Mammary epithelial cell (primary cell): ENCODE measurements at regions of chr14 and their contacts with region 1.

Region 1: GRCh38 chr14:85528080-85528896 is 1.7 kb upstream of the FLRT2 start:
- DNase-seq: peak; percentile 77
- H3K4me3 ChIP-seq: peak overlapping the region; percentile 89 to 90 (median 89)
- H3K27ac ChIP-seq: peak overlapping the region; percentile 67
- H3K4me1 ChIP-seq: peaks cover 35% of the 10 kb centered on the region
- H3K27me3 ChIP-seq: no peaks in the 10 kb centered on the region
- CTCF ChIP-seq: peak; percentile 62 to 79

Region 2: GRCh38 chr14:84250893-84251292 is 1277.4 kb before region 1 on chr14:
- CTCF ChIA-PET with region 1: no interaction called
- dilution Hi-C with region 1: no loop called
- in situ Hi-C with region 1: no loop called
- intact Hi-C with region 1: no loop called
- DNase-seq: no peak
- H3K4me3 ChIP-seq: no peak overlapping the region
- H3K27ac ChIP-seq: no peak overlapping the region
- H3K4me1 ChIP-seq: no peaks in the 10 kb centered on the region
- H3K27me3 ChIP-seq: no peaks in the 10 kb centered on the region
- CTCF ChIP-seq: no peak

Region 3: GRCh38 chr14:84806627-84807026 is 721.7 kb before region 1 on chr14:
- CTCF ChIA-PET with region 1: no interaction called
- dilution Hi-C with region 1: no loop called
- in situ Hi-C with region 1: no loop called
- intact Hi-C with region 1: loop called (anchors 10 kb)
- DNase-seq: peak; percentile 51
- H3K4me3 ChIP-seq: no peak overlapping the region
- H3K27ac ChIP-seq: peak overlapping the region; percentile 51
- H3K4me1 ChIP-seq: peaks cover 13% of the 10 kb centered on the region
- H3K27me3 ChIP-seq: no peaks in the 10 kb centered on the region
- CTCF ChIP-seq: no peak

Region 4: GRCh38 chr14:85088231-85088630 is 440.1 kb before region 1 on chr14:
- CTCF ChIA-PET with region 1: no interaction called
- dilution Hi-C with region 1: no loop called
- in situ Hi-C with region 1: no loop called
- intact Hi-C with region 1: loop called (anchors 5 kb)
- DNase-seq: peak; percentile 89
- H3K4me3 ChIP-seq: no peak overlapping the region
- H3K27ac ChIP-seq: peak overlapping the region; percentile 59
- H3K4me1 ChIP-seq: peaks cover 14% of the 10 kb centered on the region
- H3K27me3 ChIP-seq: no peaks in the 10 kb centered on the region
- CTCF ChIP-seq: no peak

Region 5: DNA sequence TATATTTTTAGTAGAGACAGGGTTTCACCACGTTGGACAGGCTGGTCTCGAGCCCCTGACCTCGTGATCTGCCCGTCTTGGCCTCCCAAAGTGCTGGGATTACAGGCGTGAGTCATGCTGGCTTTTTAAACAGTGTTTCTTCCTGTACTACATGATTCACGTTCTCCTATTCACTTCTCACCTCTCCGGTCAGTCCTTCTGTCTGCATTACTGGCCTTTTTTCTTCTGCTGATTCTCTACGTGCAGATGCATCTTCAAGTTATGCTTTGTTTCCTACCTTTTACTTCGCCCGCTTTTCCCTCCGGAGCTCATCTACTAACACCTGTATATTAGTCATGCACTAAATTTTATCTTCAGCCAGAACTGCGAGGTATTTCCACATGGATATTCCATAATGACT is 294.5 kb before region 1 on chr14:
- CTCF ChIA-PET with region 1: interaction called, 3 read pairs
- dilution Hi-C with region 1: no loop called
- in situ Hi-C with region 1: loop called in 1 of 2 experiments (anchors 10 kb)
- intact Hi-C with region 1: loop called (anchors 1 kb)
- DNase-seq: peak; percentile 86
- H3K4me3 ChIP-seq: no peak overlapping the region
- H3K27ac ChIP-seq: peak overlapping the region; percentile 56
- H3K4me1 ChIP-seq: peaks cover 16% of the 10 kb centered on the region
- H3K27me3 ChIP-seq: no peaks in the 10 kb centered on the region
- CTCF ChIP-seq: no peak

Region 6: DNA sequence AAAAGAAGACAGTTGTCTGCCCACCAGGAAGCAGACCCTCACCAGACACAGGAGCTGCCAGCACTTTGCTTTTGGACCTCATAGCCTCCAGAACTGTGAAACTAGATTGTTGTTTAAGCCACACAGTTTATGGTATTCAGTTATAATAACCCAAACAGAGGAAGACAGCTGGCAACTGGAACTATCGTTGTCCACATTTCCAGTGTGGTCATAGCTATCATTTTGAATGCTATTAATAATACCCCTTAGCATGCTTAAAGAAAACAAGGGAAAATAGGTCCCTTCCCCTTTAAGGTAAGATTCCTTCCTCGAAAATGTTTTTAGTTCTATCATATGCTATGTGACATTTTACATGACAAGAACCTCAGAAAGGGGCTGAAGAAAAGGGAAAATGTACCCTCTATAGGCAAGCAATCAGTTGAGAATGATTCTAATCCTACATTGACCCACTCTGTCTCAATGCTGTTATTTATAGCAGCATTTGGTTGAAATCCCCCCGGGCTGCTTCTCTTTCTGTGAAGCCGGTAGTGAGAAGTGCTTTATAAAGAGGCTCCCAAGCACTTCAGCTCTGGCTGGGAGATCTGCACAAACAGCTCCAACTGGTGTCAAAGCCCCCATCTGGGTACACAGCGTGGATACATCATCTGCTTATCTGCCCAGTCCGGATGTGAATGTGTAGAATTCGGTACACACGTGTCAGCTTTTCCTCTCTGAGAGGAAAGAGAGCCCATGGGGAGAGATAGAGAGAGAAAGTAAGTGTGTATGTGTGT is 219.6 kb before region 1 on chr14:
- CTCF ChIA-PET with region 1: no interaction called
- dilution Hi-C with region 1: no loop called
- in situ Hi-C with region 1: no loop called
- intact Hi-C with region 1: no loop called
- DNase-seq: no peak
- H3K4me3 ChIP-seq: no peak overlapping the region
- H3K27ac ChIP-seq: no peak overlapping the region
- H3K4me1 ChIP-seq: no peaks in the 10 kb centered on the region
- H3K27me3 ChIP-seq: no peaks in the 10 kb centered on the region
- CTCF ChIP-seq: no peak

Region 7: GRCh38 chr14:85437148-85437547 is 91.1 kb before region 1 on chr14:
- CTCF ChIA-PET with region 1: interaction called, 3 read pairs
- dilution Hi-C with region 1: no loop called
- in situ Hi-C with region 1: no loop called
- intact Hi-C with region 1: loop called (anchors 1 kb)
- DNase-seq: peak; percentile 96
- H3K4me3 ChIP-seq: no peak overlapping the region
- H3K27ac ChIP-seq: peak overlapping the region; percentile 96
- H3K4me1 ChIP-seq: peaks cover 53% of the 10 kb centered on the region
- H3K27me3 ChIP-seq: no peaks in the 10 kb centered on the region
- CTCF ChIP-seq: no peak

Region 8: DNA sequence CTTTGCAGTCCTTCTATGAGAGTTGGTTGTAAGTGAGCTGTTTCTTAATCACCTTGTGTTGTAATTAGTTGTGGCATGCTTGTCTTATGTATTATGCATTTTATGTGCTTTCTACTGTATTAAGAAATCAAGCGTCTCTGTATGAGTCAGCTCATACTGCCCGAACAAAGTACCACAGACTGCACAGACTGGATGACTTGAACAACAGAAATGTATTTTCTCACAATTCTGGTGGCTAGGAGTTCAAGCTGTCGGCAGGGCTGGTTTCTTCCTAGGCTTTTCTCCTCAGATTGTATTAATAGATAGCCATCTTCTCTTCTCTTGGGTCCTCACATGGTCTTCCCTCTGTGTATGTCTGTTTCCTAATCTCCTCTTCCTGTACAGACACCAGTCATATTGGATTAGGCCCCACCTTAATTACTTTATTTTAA is 79.4 kb after region 1 on chr14:
- CTCF ChIA-PET with region 1: no interaction called
- dilution Hi-C with region 1: no loop called
- in situ Hi-C with region 1: no loop called
- intact Hi-C with region 1: loop called (anchors 1 kb)
- DNase-seq: peak; percentile 92
- H3K4me3 ChIP-seq: peak overlapping the region in 1 of 3 experiments; percentile 8
- H3K27ac ChIP-seq: peak overlapping the region; percentile 73
- H3K4me1 ChIP-seq: peaks cover 16% of the 10 kb centered on the region
- H3K27me3 ChIP-seq: no peaks in the 10 kb centered on the region
- CTCF ChIP-seq: no peak